ENCODE measurements at regions of chr11 and their contacts with region 1.

Region 1: GRCh38 chr11:14249121-14249963 is 109.6 kb downstream of the RRAS2 start:
- DNase-seq: no peak
- ATAC-seq: peak; percentile 79

Region 2: GRCh38 chr11:13776134-13776815 is 473.1 kb before region 1 on chr11:
- intact Hi-C with region 1: loop called (anchors 5 kb)
- DNase-seq: no peak
- ATAC-seq: no peak

Region 3: GRCh38 chr11:13955971-13956421 is 293.3 kb before region 1 on chr11:
- intact Hi-C with region 1: loop called (anchors 2 kb)
- DNase-seq: no peak
- ATAC-seq: peak; percentile 82

Region 4: DNA sequence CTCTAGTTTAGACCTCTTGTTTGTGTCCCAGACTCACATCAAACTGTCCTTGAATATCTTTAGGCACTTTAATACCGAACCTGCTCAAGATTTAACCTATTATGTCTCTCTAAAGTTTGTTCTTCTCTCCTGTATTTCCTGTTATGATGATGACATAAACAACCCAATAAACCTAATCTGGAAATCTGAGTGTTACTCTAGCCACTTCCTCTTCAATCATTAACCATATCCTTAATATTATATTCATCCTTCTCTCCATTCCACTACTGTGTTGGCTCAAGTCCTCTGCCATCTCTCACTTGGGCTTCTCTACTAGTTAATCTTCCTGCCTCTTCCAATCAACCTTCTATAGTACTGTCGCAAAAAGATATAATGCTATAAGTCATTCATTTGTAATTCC is 214.3 kb after region 1 on chr11:
- intact Hi-C with region 1: no loop called
- DNase-seq: no peak
- ATAC-seq: no peak